SK-N-SH (cell line): ENCODE measurements at regions of chr12 and their contacts with region 1.

Region 1: DNA sequence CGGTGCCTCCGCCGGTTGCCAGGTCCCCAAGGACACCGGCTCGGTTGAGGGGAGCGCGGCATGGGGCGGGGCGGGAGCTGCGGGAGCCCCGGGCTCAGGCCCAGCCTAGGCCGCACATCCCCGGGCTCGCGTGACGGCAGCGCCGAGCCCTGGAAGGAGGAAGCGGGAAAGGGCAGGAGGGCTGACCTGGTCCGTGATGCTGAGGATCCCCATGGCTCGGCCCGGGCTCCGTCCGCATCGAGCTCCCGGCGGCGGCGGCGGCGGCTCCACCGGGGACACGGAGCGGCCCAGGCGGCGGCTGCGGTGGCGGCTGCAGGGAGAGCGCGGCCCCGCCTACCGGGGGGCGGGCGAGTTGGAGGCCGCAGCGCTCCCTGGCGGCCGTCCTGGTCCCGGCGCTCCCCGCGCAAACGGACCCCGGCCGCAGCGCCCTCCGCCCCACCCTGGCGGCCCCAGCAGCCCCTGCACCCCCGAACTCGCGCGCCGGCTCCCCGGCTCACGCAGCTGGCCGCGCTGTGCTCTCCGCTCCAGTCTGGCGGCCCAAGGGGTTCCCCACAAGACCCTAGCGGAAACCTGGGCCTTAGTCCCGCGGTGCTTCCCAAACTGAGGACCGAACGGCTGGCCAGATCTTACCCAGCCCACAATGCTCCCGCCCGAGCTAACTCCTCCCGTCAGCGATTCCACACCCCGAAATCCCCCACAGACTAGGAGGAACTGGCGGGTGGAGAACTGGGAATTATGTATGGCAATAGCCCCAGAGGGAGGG is at the start of gene ANKRD52:
- DNase-seq: peak; percentile 98
- H3K4me3 ChIP-seq: peak within 1 kb of the TSS; percentile 90 to 95
- H3K27ac ChIP-seq: peak within 1 kb of the TSS; percentile 75 to 92
- H3K4me1 ChIP-seq: peaks cover 15 to 19% of the 10 kb centered on the region in 2 experiments
- H3K27me3 ChIP-seq: no peaks in the 10 kb centered on the region
- CTCF ChIP-seq: peak; percentile 68
- EP300 ChIP-seq: no peak; a peak in 1 of 4 replicates
- RAD21 ChIP-seq: peak; percentile 8; the same call in 1 of the 2 replicates
- polyA plus RNA-seq, gene ANKRD52: 22.5 and 23.4 TPM in 2 replicates

Region 2: GRCh38 chr12:55188974-55189556 is 1069.2 kb before region 1 on chr12:
- CTCF ChIA-PET with region 1: no interaction called
- POLR2A ChIA-PET with region 1: no interaction called
- DNase-seq: peak; percentile 39
- H3K4me3 ChIP-seq: no peak overlapping the region
- H3K27ac ChIP-seq: no peak overlapping the region
- H3K4me1 ChIP-seq: no peaks in the 10 kb centered on the region
- H3K27me3 ChIP-seq: peaks cover 7% of the 10 kb centered on the region; the same call in 1 of the 2 replicates
- CTCF ChIP-seq: peak; percentile 85
- EP300 ChIP-seq: no peak
- RAD21 ChIP-seq: peak; percentile 77

Region 3: GRCh38 chr12:56206457-56207166 is 51.6 kb before region 1 on chr12:
- CTCF ChIA-PET with region 1: interaction called, 30 read pairs
- POLR2A ChIA-PET with region 1: no interaction called
- DNase-seq: peak; percentile 67
- H3K4me3 ChIP-seq: no peak overlapping the region
- H3K27ac ChIP-seq: peak overlapping the region in 1 of 2 experiments; percentile 29; a peak in 1 of 4 replicates
- H3K4me1 ChIP-seq: no peaks in the 10 kb centered on the region; a peak in 1 of 4 replicates
- H3K27me3 ChIP-seq: no peaks in the 10 kb centered on the region
- CTCF ChIP-seq: peak; percentile 66
- EP300 ChIP-seq: no peak
- RAD21 ChIP-seq: peak; percentile 61

Region 4: GRCh38 chr12:56224102-56224701 is 34.0 kb before region 1 on chr12 and contains the start of gene NABP2:
- CTCF ChIA-PET with region 1: interaction called, 23 read pairs
- POLR2A ChIA-PET with region 1: interaction called, 3 read pairs
- DNase-seq: peak; percentile 98
- H3K4me3 ChIP-seq: peak within 1 kb of the TSS; percentile 67 to 97
- H3K27ac ChIP-seq: peak within 1 kb of the TSS; percentile 62 to 64
- H3K4me1 ChIP-seq: peaks cover 13 to 22% of the 10 kb centered on the region in 2 experiments; a peak in 2 of 4 replicates
- H3K27me3 ChIP-seq: no peaks in the 10 kb centered on the region
- CTCF ChIP-seq: peak; percentile 89
- EP300 ChIP-seq: no peak; a peak in 1 of 4 replicates
- RAD21 ChIP-seq: peak; percentile 56
- polyA plus RNA-seq, gene NABP2: 49.3 and 52.3 TPM in 2 replicates

Region 5: GRCh38 chr12:56234746-56235436 is 23.3 kb before region 1 on chr12:
- CTCF ChIA-PET with region 1: interaction called, 31 read pairs
- POLR2A ChIA-PET with region 1: no interaction called
- DNase-seq: peak; percentile 69
- H3K4me3 ChIP-seq: no peak overlapping the region
- H3K27ac ChIP-seq: no peak overlapping the region
- H3K4me1 ChIP-seq: peaks cover 0 to 7% of the 10 kb centered on the region in 2 experiments; a peak in 1 of 4 replicates
- H3K27me3 ChIP-seq: no peaks in the 10 kb centered on the region
- CTCF ChIP-seq: no peak
- EP300 ChIP-seq: no peak
- RAD21 ChIP-seq: no peak

Region 6: DNA sequence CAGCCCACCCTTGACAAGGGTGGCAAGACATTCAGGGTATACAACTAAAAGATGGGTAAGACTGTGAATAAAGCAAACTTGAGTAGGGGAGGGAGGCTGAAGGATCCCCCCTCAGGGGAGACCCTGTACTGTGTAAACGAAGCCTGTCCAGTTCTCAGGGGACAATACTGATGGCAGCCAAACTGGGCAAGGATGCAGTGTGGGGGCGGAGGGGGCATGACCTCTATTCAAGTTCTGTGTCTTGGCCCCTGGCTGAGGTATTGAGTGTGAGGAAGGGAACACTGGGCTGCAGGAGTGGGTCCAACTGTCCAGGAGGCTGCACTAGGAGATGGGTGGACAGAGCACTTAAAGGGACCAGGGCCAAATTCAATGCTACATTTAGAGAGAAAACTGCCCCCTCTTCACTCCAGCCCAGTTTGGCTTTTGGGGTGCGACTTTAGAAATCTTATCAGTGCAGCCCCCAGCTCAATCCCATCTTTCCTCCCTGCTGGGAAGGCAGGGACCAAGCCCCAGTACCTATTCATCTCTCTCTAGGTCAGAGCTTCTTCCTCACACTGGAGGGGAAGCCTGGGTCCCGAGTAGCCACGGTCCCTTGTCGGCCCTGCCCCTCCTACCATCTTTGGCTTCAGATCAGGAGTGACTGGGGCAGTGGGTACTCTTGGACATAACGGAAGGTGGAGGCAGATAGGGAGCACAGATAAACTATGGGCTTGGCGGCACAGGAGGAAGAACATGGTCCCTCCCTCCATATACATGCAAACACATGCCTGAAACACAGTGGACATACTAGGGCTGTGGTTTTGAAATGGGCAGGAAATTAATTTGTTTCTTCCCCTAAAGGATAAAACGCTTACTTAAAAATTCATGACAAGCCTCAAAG is 16.6 kb before region 1 on chr12:
- CTCF ChIA-PET with region 1: interaction called, 31 read pairs
- POLR2A ChIA-PET with region 1: no interaction called
- DNase-seq: no peak
- H3K4me3 ChIP-seq: no peak overlapping the region
- H3K27ac ChIP-seq: no peak overlapping the region; a peak in 1 of 4 replicates
- H3K4me1 ChIP-seq: no peaks in the 10 kb centered on the region
- H3K27me3 ChIP-seq: no peaks in the 10 kb centered on the region
- CTCF ChIP-seq: no peak
- EP300 ChIP-seq: no peak
- RAD21 ChIP-seq: no peak

Region 7: DNA sequence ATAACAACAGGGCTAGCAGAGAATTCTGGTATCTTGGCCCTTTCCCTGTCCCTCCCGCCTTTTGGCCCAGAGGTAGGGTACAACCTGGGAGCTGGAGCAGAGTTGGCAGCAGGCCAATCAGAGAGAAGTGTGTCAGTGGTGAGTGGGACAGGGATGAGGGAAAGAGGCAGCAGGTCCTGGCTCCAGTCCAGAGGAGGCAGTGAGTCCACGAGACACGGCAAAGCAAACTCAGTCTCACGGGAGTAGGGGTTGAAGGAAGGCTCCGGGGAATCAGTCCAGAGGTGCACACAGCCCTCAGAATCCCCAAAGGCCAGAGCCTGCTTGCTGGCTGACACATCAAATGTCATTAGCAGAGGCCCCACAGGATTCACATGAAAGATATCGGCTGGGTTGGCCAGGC is 68.3 kb after region 1 on chr12:
- CTCF ChIA-PET with region 1: no interaction called
- POLR2A ChIA-PET with region 1: no interaction called
- DNase-seq: no peak
- H3K4me3 ChIP-seq: no peak overlapping the region
- H3K27ac ChIP-seq: no peak overlapping the region
- H3K4me1 ChIP-seq: no peaks in the 10 kb centered on the region
- H3K27me3 ChIP-seq: no peaks in the 10 kb centered on the region
- CTCF ChIP-seq: no peak
- EP300 ChIP-seq: no peak
- RAD21 ChIP-seq: no peak